Mammary epithelial cell (primary cell): ENCODE measurements at regions of chr15 and their contacts with region 1.

Region 1: DNA sequence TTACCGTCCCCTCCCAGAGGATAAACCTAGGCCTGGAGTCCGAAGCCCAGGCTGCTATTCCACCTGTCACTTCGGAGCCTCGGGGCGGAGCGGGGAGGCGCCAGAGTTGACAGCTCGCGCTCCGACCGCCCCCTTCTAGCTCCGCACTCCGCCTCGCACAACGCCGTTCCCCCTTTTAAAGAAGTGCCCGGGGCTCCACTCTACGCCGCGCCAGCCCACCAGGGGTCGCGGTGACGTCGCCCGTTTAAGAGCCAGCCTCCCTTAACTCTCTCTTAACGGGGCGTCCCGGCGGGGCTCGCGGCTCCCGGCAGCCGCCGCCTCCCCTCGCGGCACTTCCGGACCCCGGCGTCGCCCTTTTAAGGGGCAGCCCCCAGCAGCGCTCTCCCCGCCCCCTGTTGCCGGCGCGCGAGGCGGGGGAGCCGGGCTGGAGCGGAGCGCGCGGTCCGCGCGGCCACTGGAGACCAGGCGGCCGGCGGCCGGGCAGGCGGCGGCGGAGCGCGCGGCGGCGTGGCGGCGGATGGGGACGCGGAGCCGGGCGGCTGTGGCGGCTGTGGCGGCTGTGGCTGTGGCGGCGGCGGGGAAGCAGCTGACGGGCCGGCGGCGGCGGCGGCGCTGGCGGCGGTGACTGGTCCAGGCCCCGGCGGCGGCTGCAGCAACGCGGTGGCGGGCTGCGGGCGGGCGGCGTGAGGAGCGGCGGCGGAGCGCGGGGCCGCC is at the start of gene INAFM2:
- DNase-seq: peak; percentile 90
- H3K4me3 ChIP-seq: peak within 1 kb of the TSS; percentile 61 to 77 (median 64)
- H3K27ac ChIP-seq: no peak within 1 kb of the TSS
- H3K4me1 ChIP-seq: peaks cover 46% of the 10 kb centered on the region
- H3K27me3 ChIP-seq: no peaks in the 10 kb centered on the region
- CTCF ChIP-seq: peak; percentile 6 to 34
- total RNA-seq, gene INAFM2: 25.5 to 28.0 TPM

Region 2: GRCh38 chr15:40244663-40245601 is 78.5 kb before region 1 on chr15:
- CTCF ChIA-PET with region 1: no interaction called
- dilution Hi-C with region 1: loop called (anchors 5 kb)
- in situ Hi-C with region 1: no loop called
- intact Hi-C with region 1: no loop called
- DNase-seq: peak; percentile 59
- H3K4me3 ChIP-seq: no peak overlapping the region
- H3K27ac ChIP-seq: no peak overlapping the region
- H3K4me1 ChIP-seq: peaks cover 85% of the 10 kb centered on the region
- H3K27me3 ChIP-seq: no peaks in the 10 kb centered on the region
- CTCF ChIP-seq: no peak

Region 3: DNA sequence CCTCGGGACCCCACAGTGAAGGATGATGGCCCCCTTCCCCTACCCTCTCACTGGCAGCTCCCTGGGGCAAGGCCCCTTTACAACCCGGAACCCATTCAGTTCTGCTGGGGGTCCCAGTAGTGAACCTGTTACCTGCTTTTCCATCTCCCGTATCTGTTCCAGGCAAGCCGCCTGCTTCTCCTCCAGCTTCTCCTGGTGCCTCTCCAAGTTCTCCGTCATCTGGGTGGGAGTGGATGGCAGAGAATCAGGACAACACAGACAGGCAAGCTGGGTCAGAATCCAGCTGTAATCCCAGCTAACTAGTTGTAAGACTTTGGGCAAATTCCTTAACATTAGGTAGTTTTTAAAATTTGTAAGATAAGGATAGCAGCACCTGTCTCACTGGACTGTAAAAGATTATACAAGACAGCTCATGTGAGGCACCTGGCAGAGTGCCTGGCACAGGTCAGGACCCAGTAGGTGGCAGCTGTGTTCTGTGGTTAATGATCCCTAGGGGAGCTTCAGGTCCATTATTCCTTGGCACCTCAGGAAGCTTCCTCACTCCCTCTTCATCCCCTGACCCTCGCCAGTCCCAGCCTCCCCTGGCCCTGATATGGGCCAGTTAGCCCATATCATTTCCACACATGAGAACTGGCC is 34.1 kb before region 1 on chr15:
- CTCF ChIA-PET with region 1: no interaction called
- dilution Hi-C with region 1: loop called (anchors 5 kb)
- in situ Hi-C with region 1: no loop called
- intact Hi-C with region 1: no loop called
- DNase-seq: peak; percentile 41
- H3K4me3 ChIP-seq: no peak overlapping the region
- H3K27ac ChIP-seq: no peak overlapping the region
- H3K4me1 ChIP-seq: peaks cover 5% of the 10 kb centered on the region
- H3K27me3 ChIP-seq: no peaks in the 10 kb centered on the region
- CTCF ChIP-seq: peak in 1 of 2 donors; percentile 29

Region 4: DNA sequence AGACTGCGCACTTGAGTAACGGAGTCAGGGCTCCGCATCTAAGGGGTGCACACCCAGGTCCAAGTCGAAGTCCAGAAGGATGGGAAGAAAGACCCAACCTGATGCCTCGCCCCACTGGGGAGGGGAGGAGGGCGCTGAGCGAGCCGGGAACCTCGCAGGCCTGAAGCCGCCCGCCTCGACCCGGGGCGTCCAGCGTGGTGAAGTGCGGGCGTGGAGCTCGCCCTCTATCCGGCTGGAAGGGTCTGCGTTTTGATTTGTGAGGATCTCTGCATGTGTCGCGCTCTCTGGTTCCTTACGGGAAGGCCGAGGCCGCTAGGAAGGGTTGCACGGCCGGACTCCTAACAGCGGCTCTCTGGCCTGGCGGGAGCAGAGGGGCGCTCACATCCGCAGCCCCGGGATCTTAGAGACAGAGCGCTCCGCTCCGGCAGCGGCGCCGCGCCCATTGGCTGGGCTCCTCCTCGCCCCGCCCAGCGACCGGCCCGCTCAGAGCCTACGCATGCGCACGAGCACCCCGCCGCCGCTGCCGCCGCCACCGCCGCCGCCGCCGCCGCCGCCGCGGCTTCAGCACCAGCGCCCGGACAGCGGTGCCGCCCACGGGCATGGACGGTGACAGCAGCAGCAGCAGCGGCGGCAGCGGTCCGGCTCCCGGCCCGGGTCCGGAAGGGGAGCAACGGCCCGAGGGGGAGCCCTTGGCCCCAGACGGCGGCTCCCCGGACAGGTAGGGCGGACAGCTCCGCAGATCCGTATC is 34.5 kb after region 1 on chr15 and contains the start of gene DISP2:
- CTCF ChIA-PET with region 1: interaction called, 4 read pairs
- dilution Hi-C with region 1: loop called (anchors 5 kb)
- in situ Hi-C with region 1: no loop called
- intact Hi-C with region 1: no loop called
- DNase-seq: peak; percentile 71
- H3K4me3 ChIP-seq: peak within 1 kb of the TSS; percentile 37 to 53 (median 52)
- H3K27ac ChIP-seq: no peak within 1 kb of the TSS
- H3K4me1 ChIP-seq: peaks cover 32% of the 10 kb centered on the region
- H3K27me3 ChIP-seq: no peaks in the 10 kb centered on the region
- CTCF ChIP-seq: no peak
- total RNA-seq, gene DISP2: under 0.01 to 1.6 TPM

Region 5: GRCh38 chr15:40388946-40389841 is 65.8 kb after region 1 on chr15:
- CTCF ChIA-PET with region 1: no interaction called
- dilution Hi-C with region 1: loop called (anchors 5 kb)
- in situ Hi-C with region 1: no loop called
- intact Hi-C with region 1: no loop called
- DNase-seq: peak; percentile 53
- H3K4me3 ChIP-seq: no peak overlapping the region
- H3K27ac ChIP-seq: no peak overlapping the region
- H3K4me1 ChIP-seq: peaks cover 2% of the 10 kb centered on the region
- H3K27me3 ChIP-seq: no peaks in the 10 kb centered on the region
- CTCF ChIP-seq: no peak